ENCODE measurements at regions of chr17 and their contacts with region 1.

Region 1: GRCh38 chr17:39486242-39486641 is 25.0 kb downstream of the CDK12 start:
- DNase-seq: no peak
- H3K4me3 ChIP-seq: no peak overlapping the region
- H3K27ac ChIP-seq: no peak overlapping the region
- H3K4me1 ChIP-seq: no peaks in the 10 kb centered on the region
- H3K27me3 ChIP-seq: no peaks in the 10 kb centered on the region
- CTCF ChIP-seq: no peak

Region 2: DNA sequence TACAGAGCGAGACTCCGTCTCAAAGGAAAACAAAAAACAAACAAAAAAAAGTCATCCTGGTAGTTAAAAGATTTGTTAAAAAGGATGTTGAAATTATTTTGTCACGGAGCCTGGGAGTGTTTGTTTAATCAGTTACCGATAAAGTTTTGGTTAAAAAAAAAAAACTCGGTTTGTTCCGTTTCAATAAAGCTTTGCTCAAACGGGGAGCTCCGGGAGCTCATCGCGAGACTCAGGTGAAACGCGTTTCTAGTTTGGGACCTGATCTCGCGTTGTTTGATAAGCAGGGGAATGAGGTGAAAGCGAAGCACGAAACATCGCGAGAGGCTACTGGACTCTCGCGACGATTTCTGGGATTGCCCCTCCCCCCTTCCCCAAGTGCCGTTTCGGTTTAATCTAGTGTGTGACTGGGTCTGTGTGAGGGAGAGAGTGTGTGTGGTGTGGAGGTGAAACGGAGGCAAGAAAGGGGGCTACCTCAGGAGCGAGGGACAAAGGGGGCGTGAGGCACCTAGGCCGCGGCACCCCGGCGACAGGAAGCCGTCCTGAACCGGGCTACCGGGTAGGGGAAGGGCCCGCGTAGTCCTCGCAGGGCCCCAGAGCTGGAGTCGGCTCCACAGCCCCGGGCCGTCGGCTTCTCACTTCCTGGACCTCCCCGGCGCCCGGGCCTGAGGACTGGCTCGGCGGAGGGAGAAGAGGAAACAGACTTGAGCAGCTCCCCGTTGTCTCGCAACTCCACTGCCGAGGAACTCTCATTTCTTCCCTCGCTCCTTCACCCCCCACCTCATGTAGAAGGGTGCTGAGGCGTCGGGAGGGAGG is 24.9 kb before region 1 on chr17 and contains the start of gene CDK12:
- CTCF ChIA-PET with region 1: no interaction called
- POLR2A ChIA-PET with region 1: interaction called, 14 read pairs
- intact Hi-C with region 1: no loop called
- DNase-seq: peak; percentile 96
- H3K4me3 ChIP-seq: peak within 1 kb of the TSS; percentile 75
- H3K27ac ChIP-seq: peak within 1 kb of the TSS; percentile 94
- H3K4me1 ChIP-seq: no peaks in the 10 kb centered on the region
- H3K27me3 ChIP-seq: no peaks in the 10 kb centered on the region
- CTCF ChIP-seq: no peak
- total RNA-seq, gene CDK12: 43.5 TPM in 2 replicates

Region 3: DNA sequence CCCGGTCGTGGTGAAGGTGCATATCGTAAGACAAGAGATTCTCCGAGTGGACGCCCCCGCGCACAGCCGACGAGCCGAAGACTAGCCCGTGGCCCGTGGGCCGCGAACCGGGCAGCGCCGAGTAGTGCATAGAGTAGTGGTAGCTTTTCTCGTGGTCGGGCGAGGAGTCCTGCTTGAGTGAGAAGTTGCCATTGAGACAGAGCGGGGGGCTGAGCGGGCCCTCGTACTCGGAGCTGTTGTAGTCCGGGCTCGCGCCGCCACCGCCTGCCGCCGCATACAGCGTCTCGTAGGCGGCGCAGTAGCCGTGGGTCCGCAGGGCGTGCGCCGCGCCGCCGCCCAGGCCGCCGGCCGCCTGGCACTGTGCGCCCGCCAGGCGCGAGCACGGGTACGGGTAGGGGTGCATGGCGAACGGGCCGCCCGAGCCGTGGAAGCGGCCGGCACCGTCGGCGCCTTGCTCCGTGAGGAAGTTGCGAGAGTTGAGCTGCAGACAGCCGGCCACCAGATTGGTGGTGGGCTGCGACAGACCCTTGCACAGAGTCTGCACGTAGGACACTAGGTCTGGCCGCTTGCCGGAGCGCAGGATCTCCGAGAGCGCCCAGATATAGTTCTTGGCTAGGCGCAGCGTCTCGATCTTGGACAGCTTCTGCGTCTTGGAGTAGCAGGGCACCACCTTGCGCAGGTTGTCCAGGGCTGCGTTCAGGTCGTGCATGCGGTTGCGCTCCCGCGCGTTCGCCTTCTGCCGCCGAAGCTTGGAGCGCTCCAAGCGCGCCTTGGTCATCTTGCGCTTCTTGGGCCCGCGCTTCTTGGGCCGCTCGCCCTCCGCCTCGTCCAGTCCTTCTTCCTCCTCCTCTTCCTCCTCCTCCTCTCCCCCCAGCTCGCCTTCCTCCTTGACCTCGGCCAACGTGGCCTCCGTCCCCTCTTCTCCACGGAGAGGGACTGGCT is 119.5 kb after region 1 on chr17:
- CTCF ChIA-PET with region 1: no interaction called
- POLR2A ChIA-PET with region 1: no interaction called
- intact Hi-C with region 1: no loop called
- DNase-seq: no peak
- H3K4me3 ChIP-seq: no peak overlapping the region
- H3K27ac ChIP-seq: no peak overlapping the region
- H3K4me1 ChIP-seq: no peaks in the 10 kb centered on the region
- H3K27me3 ChIP-seq: peaks cover 68% of the 10 kb centered on the region
- CTCF ChIP-seq: no peak

Region 4: DNA sequence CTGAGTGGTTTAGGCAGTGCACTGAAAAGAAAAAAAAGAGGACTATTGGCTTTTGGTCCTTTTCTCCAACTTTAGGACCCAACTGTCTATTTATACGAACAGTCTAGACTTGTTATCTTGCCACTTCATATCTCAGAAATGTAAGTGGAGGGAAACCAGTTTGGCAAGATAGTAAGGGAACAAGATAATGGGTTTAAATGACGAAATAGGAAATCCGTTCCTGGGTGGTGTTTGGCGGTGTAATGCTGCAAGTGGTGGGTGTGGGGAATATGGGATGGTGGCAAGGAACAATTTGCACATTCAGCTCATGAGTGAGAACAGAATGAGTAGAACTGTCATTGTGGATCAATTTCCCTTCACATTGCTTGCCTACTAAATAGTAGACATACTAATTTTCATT is 296.2 kb after region 1 on chr17:
- CTCF ChIA-PET with region 1: no interaction called
- POLR2A ChIA-PET with region 1: no interaction called
- intact Hi-C with region 1: no loop called
- DNase-seq: peak; percentile 7
- H3K4me3 ChIP-seq: no peak overlapping the region
- H3K27ac ChIP-seq: no peak overlapping the region
- H3K4me1 ChIP-seq: no peaks in the 10 kb centered on the region
- H3K27me3 ChIP-seq: no peaks in the 10 kb centered on the region
- CTCF ChIP-seq: no peak